Spleen (tissue), 13 donors: ENCODE measurements at regions of chr13 and their contacts with region 1.

Region 1: DNA sequence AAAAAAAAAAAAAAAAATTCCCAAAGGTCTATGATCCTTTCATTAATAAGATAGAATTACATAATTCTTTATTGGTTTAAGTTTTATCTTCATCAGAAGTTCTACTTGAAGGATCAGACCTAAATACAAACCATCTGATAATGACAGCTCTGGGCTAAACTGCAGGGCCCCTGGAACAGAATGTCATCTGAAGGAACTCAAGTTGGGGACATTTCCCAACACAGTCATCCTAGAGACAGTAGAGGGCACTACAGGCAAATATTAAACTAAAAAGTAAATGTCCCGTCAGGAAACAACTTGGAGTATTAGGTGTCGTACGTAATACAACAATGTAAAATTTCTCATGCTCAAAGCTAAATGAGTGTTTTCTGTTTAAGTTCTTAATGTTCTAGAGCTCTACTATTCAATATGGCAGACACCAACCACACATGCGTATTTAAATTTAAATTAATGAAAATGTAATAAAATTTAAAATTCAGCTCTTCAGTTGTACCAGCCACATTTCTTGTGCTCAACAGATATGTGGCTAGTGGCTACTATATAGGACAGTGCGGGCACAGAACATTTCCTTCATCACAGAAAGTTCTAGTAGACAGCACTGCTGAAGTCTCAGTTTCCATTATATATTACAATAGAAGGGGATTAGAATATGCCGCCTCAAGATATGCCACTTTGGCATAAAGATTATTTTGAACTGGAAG is 21.8 kb upstream of the NAXD start:
- DNase-seq: no peak
- H3K4me3 ChIP-seq: no peak overlapping the region
- H3K27ac ChIP-seq: no peak overlapping the region
- H3K4me1 ChIP-seq: peaks cover 0 to 6% (median 4%) of the 10 kb centered on the region in 6 donors
- H3K27me3 ChIP-seq: no peaks in the 10 kb centered on the region
- CTCF ChIP-seq: peak; percentile 50 to 77 (median 68)
- POLR2A ChIP-seq: no peak

Region 2: GRCh38 chr13:110799246-110800236 is 206.0 kb after region 1 on chr13:
- intact Hi-C with region 1: no loop called
- DNase-seq: peak; percentile 77
- H3K4me3 ChIP-seq: peak overlapping the region in 2 of 8 donors; percentile 15 to 30
- H3K27ac ChIP-seq: peak overlapping the region; percentile 59 to 84 (median 78)
- H3K4me1 ChIP-seq: peaks cover 0 to 28% (median 17%) of the 10 kb centered on the region in 6 donors
- H3K27me3 ChIP-seq: peaks cover 0 to 41% (median 0%) of the 10 kb centered on the region in 7 donors
- CTCF ChIP-seq: no peak
- POLR2A ChIP-seq: no peak

Region 3: GRCh38 chr13:110819203-110820014 is 225.8 kb after region 1 on chr13:
- intact Hi-C with region 1: loop called (anchors 10 kb)
- DNase-seq: peak; percentile 94
- H3K4me3 ChIP-seq: no peak overlapping the region
- H3K27ac ChIP-seq: no peak overlapping the region
- H3K4me1 ChIP-seq: peaks cover 0 to 11% (median 7%) of the 10 kb centered on the region in 6 donors
- H3K27me3 ChIP-seq: no peaks in the 10 kb centered on the region
- CTCF ChIP-seq: peak; percentile 91 to 99 (median 97)
- POLR2A ChIP-seq: no peak